ENCODE measurements at regions of chr1 and their contacts with region 1.

Region 1: DNA sequence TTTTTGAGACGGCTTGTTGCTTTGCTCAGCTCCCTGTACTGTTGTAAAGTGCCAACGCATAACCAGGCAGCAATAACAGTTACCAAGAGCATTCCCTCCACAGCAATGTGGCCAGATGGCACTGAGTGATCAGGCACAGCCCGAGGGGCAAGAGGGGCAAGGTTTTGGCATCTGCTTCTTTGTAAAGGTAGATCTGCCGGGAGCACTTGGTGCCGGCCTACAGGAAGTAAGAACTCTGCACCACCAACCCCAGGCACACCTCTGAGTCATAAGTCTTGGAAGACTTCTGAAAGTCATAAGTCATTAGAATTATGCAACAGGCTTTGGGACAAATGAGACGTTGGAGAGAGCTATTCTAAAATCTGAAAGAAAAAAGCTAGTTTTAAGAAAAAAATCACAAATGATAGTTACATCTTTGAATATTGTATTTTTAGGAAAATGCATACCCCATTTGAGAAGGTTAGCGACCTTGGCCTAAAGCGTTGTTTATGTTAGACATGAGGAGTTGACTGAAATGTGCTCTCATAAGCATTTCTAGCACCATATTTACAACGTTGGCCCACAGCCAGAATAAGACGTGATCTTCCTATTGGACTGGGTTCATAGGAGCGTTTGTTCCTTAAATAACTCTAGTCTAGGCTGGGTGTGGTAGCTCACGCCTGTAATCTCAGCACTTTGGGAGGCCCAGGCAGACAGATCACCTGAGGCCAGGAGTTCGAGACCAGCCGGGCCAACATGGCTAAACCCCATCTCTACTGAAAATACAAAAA is 37.7 kb upstream of the MAP10 start:
- DNase-seq: peak in 1 of 2 donors; percentile 76
- H3K4me3 ChIP-seq: no peak overlapping the region
- H3K27ac ChIP-seq: peak overlapping the region; percentile 83 to 84
- H3K4me1 ChIP-seq: peaks cover 0 to 3% of the 10 kb centered on the region in 2 donors
- H3K27me3 ChIP-seq: no peaks in the 10 kb centered on the region
- CTCF ChIP-seq: no peak

Region 2: DNA sequence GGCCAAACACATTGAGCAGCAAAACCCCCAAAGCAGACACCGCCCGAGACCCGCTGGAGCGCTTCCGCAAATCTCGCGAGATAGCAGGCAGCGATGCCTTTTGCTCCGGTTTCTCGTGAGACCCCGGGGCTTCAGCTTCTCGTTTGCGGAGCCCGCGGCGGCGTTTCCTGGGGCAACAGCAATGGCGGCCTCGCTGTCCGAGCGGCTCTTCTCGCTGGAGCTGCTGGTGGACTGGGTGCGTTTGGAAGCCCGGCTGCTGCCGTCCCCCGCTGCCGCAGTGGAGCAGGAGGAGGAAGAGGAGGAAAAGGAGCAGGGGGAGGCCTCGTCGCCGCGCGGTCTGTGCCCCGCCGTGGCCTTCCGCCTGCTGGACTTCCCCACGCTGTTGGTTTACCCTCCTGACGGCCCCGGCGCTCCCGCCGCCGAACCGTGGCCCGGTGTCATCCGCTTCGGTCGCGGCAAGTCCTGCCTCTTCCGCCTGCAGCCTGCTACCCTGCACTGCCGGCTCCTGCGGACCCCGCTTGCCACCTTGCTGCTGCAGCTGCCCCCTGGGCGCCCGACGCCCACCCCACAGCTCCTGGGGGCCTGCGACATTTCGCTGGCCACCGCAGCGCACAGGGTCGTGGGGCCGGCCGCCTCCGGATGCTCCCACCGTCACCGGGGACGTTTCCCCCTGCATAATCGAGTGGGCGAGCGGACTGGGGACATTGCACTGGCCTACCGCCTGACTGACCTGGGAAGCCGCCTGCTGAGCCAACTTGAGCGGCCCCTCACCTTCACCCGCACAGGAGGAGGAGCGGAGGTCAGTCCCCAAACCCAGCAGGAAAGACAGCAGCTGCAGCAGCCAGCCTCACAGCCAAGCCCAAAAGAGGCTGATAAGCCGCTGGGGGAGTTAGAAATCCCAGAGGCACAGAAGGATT is 38.0 kb after region 1 on chr1 and contains the start of gene MAP10:
- intact Hi-C with region 1: no loop called
- DNase-seq: peak in 1 of 2 donors; percentile 72
- H3K4me3 ChIP-seq: peak within 1 kb of the TSS; percentile 71 to 81
- H3K27ac ChIP-seq: peak within 1 kb of the TSS; percentile 39 to 54
- H3K4me1 ChIP-seq: peaks cover 0 to 6% of the 10 kb centered on the region in 2 donors
- H3K27me3 ChIP-seq: no peaks in the 10 kb centered on the region
- CTCF ChIP-seq: no peak
- total RNA-seq, gene MAP10: 0.85 TPM

Region 3: DNA sequence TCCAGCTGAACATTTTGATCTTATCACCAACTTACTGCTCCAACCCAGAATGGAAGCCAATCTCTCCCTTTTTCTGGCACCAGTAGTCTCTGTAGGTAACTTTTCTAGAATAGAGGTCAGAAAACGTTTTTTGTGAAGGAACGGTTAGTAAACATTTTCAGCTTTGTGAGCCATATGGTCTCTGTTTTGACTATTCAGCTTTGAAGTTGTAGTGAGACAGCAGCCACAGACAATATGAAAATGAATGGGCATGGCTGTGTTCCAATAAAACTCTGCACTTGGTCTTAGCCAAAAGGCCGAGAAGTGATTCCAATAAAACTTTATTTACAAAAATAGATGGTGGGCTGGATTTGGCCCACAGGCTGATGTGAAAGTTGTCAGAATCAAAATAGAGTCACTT is 66.6 kb after region 1 on chr1:
- intact Hi-C with region 1: no loop called
- DNase-seq: no peak
- H3K4me3 ChIP-seq: no peak overlapping the region
- H3K27ac ChIP-seq: no peak overlapping the region
- H3K4me1 ChIP-seq: no peaks in the 10 kb centered on the region
- H3K27me3 ChIP-seq: no peaks in the 10 kb centered on the region
- CTCF ChIP-seq: no peak

Region 4: DNA sequence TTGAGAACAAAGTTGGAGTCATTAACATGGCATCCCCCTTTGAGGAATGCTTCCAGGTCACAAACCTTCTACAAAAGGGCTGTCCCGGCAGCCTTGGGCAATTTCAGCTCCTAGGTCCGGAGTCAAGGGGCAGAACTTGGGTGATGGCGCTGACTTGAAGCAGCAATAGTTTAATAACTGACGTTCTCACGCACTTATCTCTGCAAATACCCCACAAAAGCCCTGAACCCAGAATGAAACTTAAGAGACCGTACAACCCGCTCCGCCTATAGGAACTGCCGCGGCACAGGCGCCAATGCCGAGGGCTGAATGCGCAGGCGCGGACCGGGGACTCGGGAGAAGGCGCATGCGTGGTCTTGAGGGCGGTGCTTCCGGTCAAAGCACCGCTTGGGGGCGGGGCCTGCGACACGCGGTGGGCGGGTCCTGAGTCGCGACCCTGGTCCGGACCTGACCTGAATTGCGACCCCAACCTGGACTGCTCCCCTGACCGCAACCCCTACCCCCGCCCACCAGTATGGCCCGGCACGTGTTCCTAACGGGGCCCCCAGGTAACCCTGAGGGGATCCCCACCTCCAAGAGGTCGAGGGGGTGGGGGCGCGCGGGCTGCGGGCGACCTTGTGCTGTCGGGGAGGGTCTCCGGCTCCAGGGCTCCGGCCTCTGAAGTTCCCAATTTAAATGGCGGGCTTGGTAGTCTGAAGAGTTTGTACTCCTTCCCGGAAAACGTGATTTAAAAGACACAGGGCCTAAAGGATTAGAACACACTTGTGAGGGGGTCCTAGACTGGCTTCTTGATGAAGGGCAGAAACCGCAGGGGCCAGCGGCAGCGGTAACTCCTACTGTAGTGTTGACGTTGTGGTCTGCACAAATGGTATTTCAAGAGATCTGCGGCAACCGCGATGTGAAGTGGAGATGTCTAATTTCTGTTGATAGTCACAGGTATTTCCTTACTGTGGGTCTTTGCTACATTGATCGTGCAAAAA is 183.0 kb after region 1 on chr1 and contains the start of gene NTPCR:
- intact Hi-C with region 1: loop called (anchors 5 kb)
- DNase-seq: peak; percentile 49 to 95
- H3K4me3 ChIP-seq: peak within 1 kb of the TSS; percentile 84 to 93
- H3K27ac ChIP-seq: peak within 1 kb of the TSS; percentile 72 to 79
- H3K4me1 ChIP-seq: peaks cover 0 to 7% of the 10 kb centered on the region in 2 donors
- H3K27me3 ChIP-seq: no peaks in the 10 kb centered on the region
- CTCF ChIP-seq: peak in 2 of 3 experiments; percentile 8 to 12
- total RNA-seq, gene NTPCR: 41.6 TPM